Left ventricle myocardium inferior (tissue), 1 donor: ENCODE measurements at regions of chr22 and their contacts with region 1.

Region 1: GRCh38 chr22:19970479-19971275 is 29.1 kb upstream of the TXNRD2 start:
- DNase-seq: peak; percentile 71
- H3K4me3 ChIP-seq: no peak overlapping the region
- H3K27ac ChIP-seq: peak overlapping the region; percentile 48
- H3K4me1 ChIP-seq: peaks cover 36% of the 10 kb centered on the region
- H3K27me3 ChIP-seq: no peaks in the 10 kb centered on the region
- CTCF ChIP-seq: peak; percentile 98

Region 2: DNA sequence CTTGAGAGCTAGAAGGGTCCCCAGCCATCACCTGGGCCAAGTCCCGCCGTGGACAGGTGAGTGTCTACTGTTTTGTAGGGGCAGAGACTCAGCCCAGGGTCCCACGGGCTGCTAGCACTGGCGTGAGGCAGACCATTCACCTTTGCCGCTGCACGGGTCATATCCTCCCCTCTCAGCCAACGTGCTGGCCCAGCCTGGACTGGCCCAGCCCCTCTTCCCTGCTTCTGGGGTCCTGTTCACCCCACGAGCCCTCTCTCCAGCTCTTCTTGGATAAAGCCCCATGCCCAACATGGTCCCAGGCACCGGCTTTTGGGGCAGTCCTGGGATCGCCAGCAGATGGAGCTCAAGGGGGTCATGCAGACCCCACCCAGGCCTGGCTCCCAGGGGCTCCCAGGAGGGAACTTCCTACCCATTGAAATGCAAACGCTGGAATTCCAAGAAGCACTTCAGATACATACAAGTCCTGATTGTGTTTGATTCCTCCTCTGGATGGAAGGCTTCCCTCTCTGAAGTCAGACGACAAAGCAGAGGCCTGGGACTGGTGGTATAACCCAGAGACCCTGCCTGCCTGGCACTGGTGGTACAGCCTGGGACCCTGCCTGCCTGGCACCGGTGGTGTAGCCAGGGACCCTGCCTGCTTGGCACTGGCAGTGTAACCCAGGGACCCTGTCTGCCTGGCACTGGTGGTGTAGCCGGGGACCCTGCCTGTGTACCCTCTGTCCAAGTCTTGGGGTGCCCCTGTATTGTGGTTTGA is 265.3 kb before region 1 on chr22:
- intact Hi-C with region 1: no loop called
- DNase-seq: no peak
- H3K4me3 ChIP-seq: no peak overlapping the region
- H3K27ac ChIP-seq: no peak overlapping the region
- H3K4me1 ChIP-seq: peaks cover 11% of the 10 kb centered on the region
- H3K27me3 ChIP-seq: peaks cover 45% of the 10 kb centered on the region
- CTCF ChIP-seq: no peak

Region 3: DNA sequence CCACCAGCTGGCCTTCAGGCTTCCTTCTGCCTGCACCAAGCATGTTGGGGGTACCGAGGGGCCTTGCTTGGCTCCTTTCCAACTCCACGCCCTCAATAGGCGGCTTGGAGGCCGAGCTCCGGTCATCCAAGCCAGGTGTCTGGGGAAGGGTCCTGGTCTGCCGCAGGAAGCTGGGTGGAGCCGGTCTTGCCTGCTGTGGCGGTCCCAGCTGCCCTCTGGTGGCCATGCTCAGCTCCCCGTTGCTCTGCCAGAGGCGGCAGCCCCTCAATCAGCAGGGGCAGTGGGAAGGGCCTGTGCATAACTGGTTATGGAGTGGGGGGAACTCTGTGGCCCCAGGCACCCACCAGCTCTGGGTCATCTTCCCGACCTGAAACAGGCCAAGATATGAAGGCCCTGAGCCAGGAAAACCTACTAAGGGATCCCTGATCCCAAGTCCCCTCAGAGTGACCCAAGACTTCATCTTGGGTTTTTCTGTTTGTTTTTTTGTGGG is 42.8 kb after region 1 on chr22:
- intact Hi-C with region 1: loop called (anchors 5 kb)
- DNase-seq: peak; percentile 68
- H3K4me3 ChIP-seq: no peak overlapping the region
- H3K27ac ChIP-seq: no peak overlapping the region
- H3K4me1 ChIP-seq: peaks cover 56% of the 10 kb centered on the region
- H3K27me3 ChIP-seq: no peaks in the 10 kb centered on the region
- CTCF ChIP-seq: peak; percentile 95